Ascending aorta (tissue), 2 donors: ENCODE measurements at regions of chr17 and their contacts with region 1.

Region 1: DNA sequence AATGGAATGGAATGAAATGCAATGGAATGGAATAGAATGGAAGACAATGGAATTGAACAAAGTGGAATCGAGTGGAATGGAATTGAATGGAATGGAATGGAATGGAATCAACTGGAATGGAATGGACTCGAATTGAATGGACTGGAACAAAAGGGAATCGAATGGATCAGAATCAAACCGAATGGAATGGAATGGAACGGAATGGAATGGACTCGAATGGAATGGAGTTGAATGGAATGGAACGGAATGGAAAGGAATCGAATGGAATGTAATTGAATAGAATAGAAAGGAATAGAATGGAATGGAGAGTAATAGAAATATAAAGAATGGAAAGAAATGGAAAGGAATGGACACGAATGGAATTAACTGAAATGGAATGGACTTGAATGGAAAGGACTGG is 475.2 kb upstream of the WSB1 start:
- DNase-seq: no peak
- H3K4me3 ChIP-seq: no peak overlapping the region
- H3K27ac ChIP-seq: no peak overlapping the region
- H3K4me1 ChIP-seq: no peaks in the 10 kb centered on the region
- H3K27me3 ChIP-seq: no peaks in the 10 kb centered on the region
- CTCF ChIP-seq: no peak

Region 2: GRCh38 chr17:26774291-26775218 is 44.2 kb before region 1 on chr17:
- intact Hi-C with region 1: loop called (anchors 10 kb)
- DNase-seq: no peak
- H3K4me3 ChIP-seq: no peak overlapping the region
- H3K27ac ChIP-seq: no peak overlapping the region
- H3K4me1 ChIP-seq: no peaks in the 10 kb centered on the region
- H3K27me3 ChIP-seq: no peaks in the 10 kb centered on the region
- CTCF ChIP-seq: no peak

Region 3: GRCh38 chr17:26807024-26807423 is 11.7 kb before region 1 on chr17:
- intact Hi-C with region 1: no loop called
- DNase-seq: no peak
- H3K4me3 ChIP-seq: no peak overlapping the region
- H3K27ac ChIP-seq: no peak overlapping the region
- H3K4me1 ChIP-seq: no peaks in the 10 kb centered on the region
- H3K27me3 ChIP-seq: no peaks in the 10 kb centered on the region
- CTCF ChIP-seq: no peak

Region 4: GRCh38 chr17:27332485-27333409 is 514.0 kb after region 1 on chr17:
- intact Hi-C with region 1: no loop called
- DNase-seq: peak; percentile 95 to 99
- H3K4me3 ChIP-seq: peak overlapping the region; percentile 55 to 57
- H3K27ac ChIP-seq: peak overlapping the region; percentile 92 to 93
- H3K4me1 ChIP-seq: peaks cover 0 to 16% of the 10 kb centered on the region in 2 donors
- H3K27me3 ChIP-seq: no peaks in the 10 kb centered on the region
- CTCF ChIP-seq: peak; percentile 84 to 95 (median 87)